Calu3 (cell line): ENCODE measurements at regions of chr6 and their contacts with region 1.

Region 1: GRCh38 chr6:166877906-166878305 is 78.4 kb downstream of the RNASET2 start:
- DNase-seq: peak; percentile 24
- H3K4me3 Mint-ChIP-seq: no peak overlapping the region
- H3K27ac Mint-ChIP-seq: no peak overlapping the region
- H3K4me1 Mint-ChIP-seq: peaks cover 38% of the 10 kb centered on the region
- H3K27me3 Mint-ChIP-seq: no peaks in the 10 kb centered on the region
- CTCF ChIP-seq: no peak

Region 2: GRCh38 chr6:165744555-165745228 is 1133.2 kb before region 1 on chr6:
- CTCF ChIA-PET with region 1: no interaction called
- intact Hi-C with region 1: no loop called
- DNase-seq: no peak
- H3K4me3 Mint-ChIP-seq: no peak overlapping the region
- H3K27ac Mint-ChIP-seq: no peak overlapping the region
- H3K4me1 Mint-ChIP-seq: peaks cover 8% of the 10 kb centered on the region
- H3K27me3 Mint-ChIP-seq: no peaks in the 10 kb centered on the region
- CTCF ChIP-seq: no peak

Region 3: DNA sequence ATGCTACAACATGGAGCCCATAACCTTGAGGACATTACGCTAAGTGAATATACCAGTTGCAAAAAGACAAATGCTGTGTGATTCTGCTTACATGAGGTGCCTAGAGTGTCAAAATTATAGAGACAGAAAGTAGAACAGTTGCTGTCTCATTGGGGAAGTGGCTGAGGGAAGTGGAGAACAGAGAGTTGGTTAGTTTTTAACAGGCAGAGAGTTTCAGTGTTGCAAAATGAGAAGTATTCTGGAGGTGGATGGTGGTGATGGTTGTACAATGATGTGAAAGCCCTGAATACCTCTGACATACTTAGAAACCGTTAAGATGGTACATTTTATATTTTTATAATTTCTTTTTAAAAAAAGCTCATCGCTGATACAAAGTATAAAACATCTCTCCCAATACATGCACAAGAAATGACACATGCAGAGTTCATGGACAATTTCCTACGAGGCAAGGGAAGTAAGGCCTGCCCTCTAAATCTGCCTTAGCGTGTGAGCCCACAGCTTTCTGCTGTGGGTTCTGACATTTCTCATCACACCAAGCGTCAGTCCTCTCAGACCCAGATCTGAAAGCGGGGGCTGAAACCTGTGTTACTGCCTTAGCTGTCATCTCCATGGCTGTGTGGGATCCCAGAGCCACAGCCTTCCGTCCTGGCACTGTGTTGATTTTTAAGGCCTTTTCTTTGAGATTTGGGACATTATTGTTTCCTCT is 47.6 kb before region 1 on chr6:
- CTCF ChIA-PET with region 1: no interaction called
- intact Hi-C with region 1: no loop called
- DNase-seq: no peak
- H3K4me3 Mint-ChIP-seq: no peak overlapping the region
- H3K27ac Mint-ChIP-seq: no peak overlapping the region
- H3K4me1 Mint-ChIP-seq: no peaks in the 10 kb centered on the region
- H3K27me3 Mint-ChIP-seq: peaks cover 26% of the 10 kb centered on the region
- CTCF ChIP-seq: no peak

Region 4: GRCh38 chr6:166950443-166950821 is 72.5 kb after region 1 on chr6:
- CTCF ChIA-PET with region 1: interaction called, 3 read pairs
- intact Hi-C with region 1: loop called (anchors 5 kb)
- DNase-seq: no peak
- H3K4me3 Mint-ChIP-seq: peak overlapping the region; percentile 37
- H3K27ac Mint-ChIP-seq: peak overlapping the region; percentile 69
- H3K4me1 Mint-ChIP-seq: peaks cover 24% of the 10 kb centered on the region
- H3K27me3 Mint-ChIP-seq: no peaks in the 10 kb centered on the region
- CTCF ChIP-seq: no peak